Activated B cell treated with CpG ODN at 0.5 μM for 24 hours (primary cell): ENCODE measurements at regions of chr3 and their contacts with region 1.

Region 1: GRCh38 chr3:106333911-106334618 is 465.3 kb upstream of the CBLB start:
- DNase-seq: no peak
- ATAC-seq: peak; percentile 42
- H3K4me3 Mint-ChIP-seq: no peak overlapping the region
- H3K27ac Mint-ChIP-seq: no peak overlapping the region
- H3K4me1 Mint-ChIP-seq: peaks cover 29% of the 10 kb centered on the region
- H3K27me3 Mint-ChIP-seq: no peaks in the 10 kb centered on the region
- CTCF ChIP-seq: no peak

Region 2: DNA sequence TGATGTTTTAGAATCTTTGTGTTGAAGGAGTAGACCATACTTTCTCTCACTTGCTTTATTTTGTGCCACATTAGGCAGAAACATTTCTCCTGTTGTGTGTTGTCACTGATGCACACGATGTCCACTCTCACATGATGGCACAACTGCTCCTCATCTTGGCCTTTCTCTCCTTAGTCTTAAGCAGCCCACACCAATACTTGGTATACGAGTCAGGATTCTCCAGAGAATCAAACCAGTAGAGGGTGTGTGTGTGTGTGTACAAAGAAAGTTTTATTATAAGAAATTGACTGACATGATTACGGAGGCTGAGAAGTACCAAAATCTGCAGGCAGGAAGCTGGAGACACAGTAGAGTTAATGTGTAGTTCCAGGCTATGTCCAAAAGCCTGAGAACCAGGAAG is 780.2 kb before region 1 on chr3:
- CTCF ChIA-PET with region 1: no interaction called
- POLR2A ChIA-PET with region 1: no interaction called
- intact Hi-C with region 1: no loop called
- DNase-seq: no peak
- ATAC-seq: no peak
- H3K4me3 Mint-ChIP-seq: no peak overlapping the region
- H3K27ac Mint-ChIP-seq: no peak overlapping the region
- H3K4me1 Mint-ChIP-seq: no peaks in the 10 kb centered on the region
- H3K27me3 Mint-ChIP-seq: no peaks in the 10 kb centered on the region
- CTCF ChIP-seq: no peak

Region 3: DNA sequence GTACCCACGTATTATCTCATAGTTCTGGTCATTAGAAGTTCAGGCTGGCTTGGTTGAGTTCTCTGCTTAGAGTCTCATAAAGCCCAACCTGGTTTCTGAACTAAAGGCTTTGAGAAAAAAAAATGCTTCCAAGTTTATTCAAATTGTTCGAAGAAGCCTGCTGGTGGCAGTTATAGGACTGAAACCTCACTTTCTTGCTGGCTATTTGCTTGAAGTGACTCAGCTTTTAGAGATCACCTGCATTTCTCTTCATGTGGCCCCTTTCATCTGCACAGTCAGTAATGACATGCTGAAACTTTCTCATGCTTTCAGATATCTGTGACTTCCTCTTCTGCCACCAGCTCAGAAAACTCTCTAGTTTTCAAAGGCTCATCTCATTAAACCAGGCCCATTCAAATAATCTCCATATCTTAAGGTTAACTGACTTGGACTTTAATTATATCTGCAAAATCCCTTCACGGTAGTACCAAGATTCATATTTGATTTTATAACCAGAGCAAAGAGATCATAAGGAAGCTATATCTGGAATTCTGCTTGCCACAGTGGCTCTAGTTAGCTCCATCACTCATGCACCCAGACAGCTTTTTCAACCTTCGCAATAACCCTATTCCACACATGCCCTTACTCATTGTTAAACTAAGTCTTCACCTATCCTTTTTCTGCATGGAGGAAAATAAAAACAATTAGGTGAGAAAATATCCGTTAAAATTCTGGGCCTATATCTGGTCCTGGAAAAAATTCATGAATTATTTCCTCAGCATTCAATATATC is 31.4 kb before region 1 on chr3:
- CTCF ChIA-PET with region 1: no interaction called
- POLR2A ChIA-PET with region 1: no interaction called
- intact Hi-C with region 1: loop called (anchors 2 kb)
- DNase-seq: no peak
- ATAC-seq: peak; percentile 87
- H3K4me3 Mint-ChIP-seq: no peak overlapping the region
- H3K27ac Mint-ChIP-seq: peak overlapping the region; percentile 10
- H3K4me1 Mint-ChIP-seq: peaks cover 25% of the 10 kb centered on the region
- H3K27me3 Mint-ChIP-seq: no peaks in the 10 kb centered on the region
- CTCF ChIP-seq: no peak

Region 4: GRCh38 chr3:106392915-106393314 is 58.9 kb after region 1 on chr3:
- CTCF ChIA-PET with region 1: no interaction called
- POLR2A ChIA-PET with region 1: no interaction called
- intact Hi-C with region 1: no loop called
- DNase-seq: no peak
- ATAC-seq: no peak
- H3K4me3 Mint-ChIP-seq: no peak overlapping the region
- H3K27ac Mint-ChIP-seq: no peak overlapping the region
- H3K4me1 Mint-ChIP-seq: peaks cover 6% of the 10 kb centered on the region
- H3K27me3 Mint-ChIP-seq: no peaks in the 10 kb centered on the region
- CTCF ChIP-seq: no peak